Activated CD4-positive, alpha-beta T cell treated with anti-CD3 and anti-CD28 coated beads, Interleukin-2, amount 10 ng/mL, durations not matched to agents 7 days and 5 days (primary cell): ENCODE measurements at regions of chr19 and their contacts with region 1.

Region 1: DNA sequence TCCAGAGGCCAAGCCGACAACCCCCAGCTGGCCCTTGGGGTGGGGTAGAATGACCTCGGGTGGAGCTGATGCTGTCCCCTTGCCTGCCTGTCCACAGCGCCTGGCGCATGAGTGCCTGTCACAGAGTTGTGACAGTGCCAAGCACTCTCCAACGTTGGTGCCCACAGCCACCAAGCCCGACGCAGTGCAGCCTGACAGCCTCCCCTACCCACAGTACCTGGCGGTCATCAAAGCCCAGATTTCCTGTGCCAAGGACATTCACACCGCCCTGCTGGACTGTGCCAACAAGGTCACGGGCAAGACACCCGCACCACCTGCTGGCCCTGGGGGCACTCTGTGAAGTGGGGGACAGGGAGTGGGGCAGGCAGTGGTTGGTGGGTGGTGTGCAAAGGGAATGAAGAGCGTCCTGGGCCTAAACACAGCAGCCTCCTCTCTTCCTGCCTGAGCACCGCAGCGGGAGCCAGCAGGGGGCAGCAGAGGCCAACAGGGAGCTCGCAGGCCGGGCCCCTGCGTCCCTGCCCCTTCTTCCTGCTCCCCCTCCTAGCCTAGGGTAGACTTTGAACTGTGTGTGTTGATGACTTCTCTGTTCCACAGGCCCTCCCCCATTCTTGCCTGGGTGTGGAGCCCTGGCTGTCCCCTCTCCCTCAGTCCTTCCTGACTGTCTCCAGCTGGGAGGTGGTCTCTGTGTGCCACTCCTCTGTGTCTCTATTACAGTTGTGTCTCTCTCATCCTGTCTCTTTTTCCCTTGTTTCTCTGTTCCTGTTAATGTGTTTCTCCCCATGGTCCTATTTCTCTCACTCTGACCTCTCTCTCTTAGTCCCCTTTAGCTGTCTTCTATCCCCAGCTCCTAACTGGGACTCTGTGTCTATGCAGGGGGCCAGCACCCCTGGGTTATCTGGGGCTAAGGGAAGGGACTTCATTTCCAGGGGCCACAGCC is 6.5 kb downstream of the MED29 start:
- DNase-seq: peak; percentile 94
- H3K4me3 Mint-ChIP-seq: peak overlapping the region; percentile 64
- H3K27ac Mint-ChIP-seq: peak overlapping the region; percentile 88
- H3K4me1 Mint-ChIP-seq: peaks cover 72% of the 10 kb centered on the region
- H3K27me3 Mint-ChIP-seq: no peaks in the 10 kb centered on the region

Region 2: GRCh38 chr19:39341719-39342604 is 55.7 kb before region 1 on chr19 and contains the start of gene SAMD4B:
- CTCF ChIA-PET with region 1: interaction called, 10 read pairs
- POLR2A ChIA-PET with region 1: no interaction called
- DNase-seq: peak; percentile 99
- H3K4me3 Mint-ChIP-seq: peak within 1 kb of the TSS; percentile 89
- H3K27ac Mint-ChIP-seq: peak within 1 kb of the TSS; percentile 94
- H3K4me1 Mint-ChIP-seq: peaks cover 70% of the 10 kb centered on the region
- H3K27me3 Mint-ChIP-seq: no peaks in the 10 kb centered on the region
- total RNA-seq, gene SAMD4B: 40.2 to 45.6 TPM

Region 3: GRCh38 chr19:39412100-39412866 is 14.7 kb after region 1 on chr19 and contains the start of gene PLEKHG2:
- CTCF ChIA-PET with region 1: interaction called, 69 read pairs
- POLR2A ChIA-PET with region 1: interaction called, 10 read pairs
- DNase-seq: peak; percentile 98
- H3K4me3 Mint-ChIP-seq: peak within 1 kb of the TSS; percentile 88
- H3K27ac Mint-ChIP-seq: peak within 1 kb of the TSS; percentile 94
- H3K4me1 Mint-ChIP-seq: peaks cover 38% of the 10 kb centered on the region
- H3K27me3 Mint-ChIP-seq: peaks cover 1% of the 10 kb centered on the region
- total RNA-seq, gene PLEKHG2: 74.4 to 77.9 TPM

Region 4: GRCh38 chr19:39435499-39436349 is 38.1 kb after region 1 on chr19 and contains the start of gene RPS16:
- CTCF ChIA-PET with region 1: interaction called, 18 read pairs
- POLR2A ChIA-PET with region 1: interaction called, 3 read pairs
- DNase-seq: peak; percentile 99
- H3K4me3 Mint-ChIP-seq: peak within 1 kb of the TSS; percentile 98
- H3K27ac Mint-ChIP-seq: peak within 1 kb of the TSS; percentile 97
- H3K4me1 Mint-ChIP-seq: peaks cover 55% of the 10 kb centered on the region
- H3K27me3 Mint-ChIP-seq: peaks cover 3% of the 10 kb centered on the region
- total RNA-seq, gene RPS16: 2,465 to 3,009 TPM

Region 5: DNA sequence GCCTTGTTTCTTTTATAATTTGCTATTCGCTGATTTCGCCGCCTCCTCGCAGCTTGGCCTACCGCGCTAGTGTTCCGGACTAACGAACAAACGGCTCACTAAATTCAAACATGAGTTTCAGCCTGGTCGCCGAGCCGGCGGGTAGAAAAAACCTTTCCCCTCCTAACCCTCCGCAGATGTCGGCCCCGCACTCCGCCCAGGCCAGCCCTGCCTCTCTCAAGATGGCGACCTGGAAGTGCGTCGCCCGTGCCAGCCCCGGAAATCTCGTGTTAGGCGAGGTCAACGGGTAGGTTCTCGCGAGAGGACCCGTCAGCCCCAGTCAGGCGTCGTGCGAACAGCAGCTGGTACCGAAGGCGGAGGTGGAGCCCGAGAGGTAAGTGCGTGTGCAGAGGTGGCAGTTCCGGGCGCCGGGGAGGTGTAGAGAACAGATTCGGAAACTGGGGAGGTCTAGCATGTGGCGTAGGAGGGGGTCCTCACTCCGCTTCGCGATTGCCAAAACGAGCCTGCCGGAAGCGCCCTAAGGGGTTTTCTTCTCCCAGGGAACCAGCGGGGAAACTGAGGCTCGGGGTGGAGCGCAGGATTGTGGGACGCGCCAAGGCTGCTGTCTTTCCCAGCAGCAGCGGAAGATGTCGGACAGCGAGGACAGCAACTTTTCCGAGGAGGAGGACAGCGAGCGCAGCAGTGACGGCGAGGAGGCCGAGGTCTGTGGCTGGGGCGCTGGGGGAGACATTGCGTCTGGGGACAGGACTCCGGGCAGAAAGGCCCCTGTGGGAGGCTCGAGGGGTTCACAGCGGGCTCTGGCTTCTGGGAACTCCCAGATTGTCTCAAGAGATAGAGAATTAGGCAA is 47.9 kb after region 1 on chr19 and contains the start of gene SUPT5H:
- CTCF ChIA-PET with region 1: interaction called, 10 read pairs
- POLR2A ChIA-PET with region 1: no interaction called
- DNase-seq: peak; percentile 99
- H3K4me3 Mint-ChIP-seq: peak within 1 kb of the TSS; percentile 92
- H3K27ac Mint-ChIP-seq: peak within 1 kb of the TSS; percentile 97
- H3K4me1 Mint-ChIP-seq: peaks cover 55% of the 10 kb centered on the region
- H3K27me3 Mint-ChIP-seq: no peaks in the 10 kb centered on the region
- total RNA-seq, gene SUPT5H: 144 to 150 TPM

Region 6: GRCh38 chr19:39532233-39533002 is 134.8 kb after region 1 on chr19 and contains the start of gene EID2B:
- CTCF ChIA-PET with region 1: interaction called, 12 read pairs
- POLR2A ChIA-PET with region 1: no interaction called
- DNase-seq: peak; percentile 96
- H3K4me3 Mint-ChIP-seq: peak within 1 kb of the TSS; percentile 90
- H3K27ac Mint-ChIP-seq: peak within 1 kb of the TSS; percentile 88
- H3K4me1 Mint-ChIP-seq: peaks cover 28% of the 10 kb centered on the region
- H3K27me3 Mint-ChIP-seq: no peaks in the 10 kb centered on the region
- total RNA-seq, gene EID2B: 3.4 to 5.1 TPM

Region 7: DNA sequence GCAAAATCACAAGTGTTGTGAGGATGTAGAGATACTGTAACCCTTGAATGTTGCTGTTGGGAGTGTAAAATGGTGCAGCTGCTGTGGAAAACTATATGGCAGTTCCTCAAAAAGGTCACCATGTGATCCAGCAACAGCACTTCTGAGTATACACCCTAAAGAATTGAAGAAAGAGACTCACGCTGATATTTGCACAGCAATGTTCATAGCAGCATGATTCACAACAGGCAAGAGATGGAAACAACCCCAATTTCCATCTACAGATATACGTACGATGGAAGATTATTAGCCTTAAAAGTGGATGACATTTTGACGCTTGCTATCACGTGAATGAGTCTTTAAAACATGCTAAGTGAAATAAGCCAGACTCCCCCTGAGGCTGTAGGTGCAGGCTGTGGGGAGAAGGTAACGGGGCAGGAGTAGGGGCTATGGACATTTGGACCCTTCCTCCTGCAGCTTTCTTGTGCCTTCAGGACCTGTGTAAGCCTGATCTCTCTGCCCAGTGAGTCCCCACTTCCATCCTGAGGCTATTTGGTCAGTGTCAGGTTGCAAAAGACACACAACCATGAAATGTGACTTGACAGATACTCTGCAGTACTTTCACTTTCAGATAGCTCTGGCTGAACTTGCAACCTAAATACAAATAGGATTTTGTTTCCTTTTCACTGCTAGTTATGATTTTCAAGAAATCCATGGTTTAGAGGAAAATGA is 160.0 kb after region 1 on chr19:
- CTCF ChIA-PET with region 1: no interaction called
- POLR2A ChIA-PET with region 1: no interaction called
- DNase-seq: no peak
- H3K4me3 Mint-ChIP-seq: peak overlapping the region; percentile 52
- H3K27ac Mint-ChIP-seq: peak overlapping the region; percentile 91
- H3K4me1 Mint-ChIP-seq: peaks cover 39% of the 10 kb centered on the region
- H3K27me3 Mint-ChIP-seq: no peaks in the 10 kb centered on the region

Region 8: GRCh38 chr19:39941615-39942365 is 544.2 kb after region 1 on chr19:
- CTCF ChIA-PET with region 1: no interaction called
- POLR2A ChIA-PET with region 1: no interaction called
- DNase-seq: peak; percentile 66
- H3K4me3 Mint-ChIP-seq: peak overlapping the region; percentile 50
- H3K27ac Mint-ChIP-seq: peak overlapping the region; percentile 88
- H3K4me1 Mint-ChIP-seq: peaks cover 77% of the 10 kb centered on the region
- H3K27me3 Mint-ChIP-seq: no peaks in the 10 kb centered on the region